ENCODE measurements at regions of chrX and their contacts with region 1.

Region 1: GRCh38 chrX:46573331-46573891 is at the start of gene CHST7:
- DNase-seq: no peak
- ATAC-seq: peak; percentile 65
- H3K4me3 ChIP-seq: peak within 1 kb of the TSS; percentile 69
- H3K27ac ChIP-seq: peak within 1 kb of the TSS; percentile 80
- H3K4me1 ChIP-seq: peaks cover 26% of the 10 kb centered on the region
- H3K27me3 ChIP-seq: no peaks in the 10 kb centered on the region
- CTCF ChIP-seq: peak in 2 of 3 experiments; percentile 25 to 42; a peak in 3 of 6 replicates
- EP300 ChIP-seq: no peak
- POLR2A ChIP-seq: no peak
- RAD21 ChIP-seq: peak; percentile 38
- polyA plus RNA-seq, gene CHST7: 0.58 to 1.7 TPM

Region 2: GRCh38 chrX:46561824-46562657 is 11.4 kb before region 1 on chrX:
- CTCF ChIA-PET with region 1: interaction called, 30 read pairs
- POLR2A ChIA-PET with region 1: interaction called, 15 read pairs
- RAD21 ChIA-PET with region 1: interaction called, 43 read pairs
- SMC1A ChIA-PET with region 1: interaction called, 34 read pairs
- in situ Hi-C with region 1: no loop called
- intact Hi-C with region 1: no loop called
- DNase-seq: peak; percentile 95
- ATAC-seq: peak; percentile 99
- H3K4me3 ChIP-seq: peak overlapping the region; percentile 4; the same call in 1 of the 2 replicates
- H3K27ac ChIP-seq: peak overlapping the region; percentile 62
- H3K4me1 ChIP-seq: peaks cover 20% of the 10 kb centered on the region
- H3K27me3 ChIP-seq: no peaks in the 10 kb centered on the region
- CTCF ChIP-seq: no peak
- EP300 ChIP-seq: peak; percentile 70 to 94
- POLR2A ChIP-seq: no peak
- RAD21 ChIP-seq: 0 out of 2 replicates have a peak, but pooled peaks have one; percentile 6

Region 3: DNA sequence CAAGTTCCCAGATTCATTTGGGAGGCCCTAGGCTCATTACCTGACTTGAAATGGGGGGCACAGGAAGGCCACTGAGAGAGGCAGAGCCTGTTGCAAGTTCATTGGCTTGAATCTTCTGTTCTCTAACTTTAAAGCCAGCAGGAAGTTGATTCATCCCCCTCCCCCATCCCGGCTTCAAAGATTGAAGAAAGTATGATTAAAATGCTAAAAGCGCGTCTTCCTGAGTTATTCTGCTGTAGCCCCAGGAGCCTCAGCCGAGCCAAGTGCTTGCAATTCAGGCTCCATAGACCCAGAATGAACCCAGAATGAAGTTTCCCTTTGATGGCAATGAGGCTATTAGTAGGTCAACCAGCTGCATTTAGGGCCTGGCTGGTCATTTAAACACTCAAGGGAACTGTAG is 14.9 kb after region 1 on chrX:
- CTCF ChIA-PET with region 1: interaction called, 19 read pairs
- POLR2A ChIA-PET with region 1: interaction called, 5 read pairs
- RAD21 ChIA-PET with region 1: interaction called, 22 read pairs
- SMC1A ChIA-PET with region 1: interaction called, 17 read pairs
- in situ Hi-C with region 1: no loop called
- intact Hi-C with region 1: no loop called
- DNase-seq: no peak
- ATAC-seq: peak; percentile 22; the same call in 1 of the 3 replicates
- H3K4me3 ChIP-seq: no peak overlapping the region
- H3K27ac ChIP-seq: peak overlapping the region; percentile 41
- H3K4me1 ChIP-seq: peaks cover 21% of the 10 kb centered on the region
- H3K27me3 ChIP-seq: no peaks in the 10 kb centered on the region
- CTCF ChIP-seq: no peak
- EP300 ChIP-seq: no peak
- POLR2A ChIP-seq: no peak
- RAD21 ChIP-seq: no peak

Region 4: DNA sequence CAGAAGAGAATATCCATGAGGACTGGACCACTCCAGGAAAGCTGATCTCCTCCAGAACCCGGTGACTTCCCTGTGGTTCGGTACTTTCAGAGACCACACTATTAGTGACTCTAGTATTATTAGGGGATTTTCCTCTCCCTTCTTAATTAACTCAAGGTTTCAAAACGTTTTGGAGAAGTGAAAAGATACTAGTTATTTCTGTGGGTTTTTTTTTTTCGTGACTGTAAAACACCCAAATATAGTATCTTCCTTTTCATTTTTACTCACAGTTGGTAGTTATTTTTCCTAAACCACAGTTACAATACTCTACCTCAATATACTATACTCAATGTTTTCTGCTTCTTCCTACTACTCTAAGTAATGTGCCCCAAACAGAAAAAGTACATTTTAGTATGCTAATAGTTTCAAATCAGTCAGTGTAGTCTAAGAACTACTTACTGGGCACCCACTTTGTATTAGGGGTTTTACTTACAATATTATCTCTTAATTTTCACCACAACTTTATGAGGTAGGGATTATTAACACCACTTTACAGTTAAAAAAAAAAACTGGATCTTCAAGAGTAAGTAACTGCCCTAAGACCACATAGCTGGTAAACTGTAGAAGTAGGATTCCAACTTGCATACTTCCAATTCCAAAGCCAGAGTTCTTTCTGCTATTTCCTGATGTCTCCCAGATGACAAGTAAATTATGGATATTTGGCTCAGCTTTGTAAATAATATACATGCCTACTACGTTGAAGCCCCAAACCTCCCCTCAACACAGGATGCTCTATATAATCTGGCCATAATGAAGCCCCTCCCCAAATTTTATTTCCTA is 140.5 kb after region 1 on chrX:
- CTCF ChIA-PET with region 1: no interaction called
- POLR2A ChIA-PET with region 1: no interaction called
- RAD21 ChIA-PET with region 1: interaction called, 4 read pairs
- SMC1A ChIA-PET with region 1: interaction called, 3 read pairs
- in situ Hi-C with region 1: no loop called
- intact Hi-C with region 1: loop called (anchors 5 kb)
- DNase-seq: peak; percentile 82
- ATAC-seq: peak; percentile 70
- H3K4me3 ChIP-seq: peak overlapping the region; percentile 33
- H3K27ac ChIP-seq: peak overlapping the region; percentile 89
- H3K4me1 ChIP-seq: peaks cover 60% of the 10 kb centered on the region
- H3K27me3 ChIP-seq: no peaks in the 10 kb centered on the region
- CTCF ChIP-seq: no peak
- EP300 ChIP-seq: peak; percentile 98 to 99
- POLR2A ChIP-seq: no peak
- RAD21 ChIP-seq: no peak